Activated CD8-positive, alpha-beta T cell treated with anti-CD3 and anti-CD28 coated beads, Interleukin-2, amount 10 ng/mL, durations not matched to agents 7 days and 5 days (primary cell): ENCODE measurements at regions of chr17 and their contacts with region 1.

Region 1: GRCh38 chr17:29124117-29124924 is 55.9 kb downstream of the MYO18A start:
- DNase-seq: peak; percentile 69
- ATAC-seq: peak; percentile 88
- H3K4me3 Mint-ChIP-seq: no peak overlapping the region
- H3K27ac Mint-ChIP-seq: peak overlapping the region; percentile 30
- H3K4me1 Mint-ChIP-seq: peaks cover 4% of the 10 kb centered on the region
- H3K27me3 Mint-ChIP-seq: no peaks in the 10 kb centered on the region

Region 2: GRCh38 chr17:29111816-29112499 is 12.4 kb before region 1 on chr17:
- CTCF ChIA-PET with region 1: interaction called, 86 read pairs
- POLR2A ChIA-PET with region 1: interaction called, 3 read pairs
- DNase-seq: peak; percentile 71
- ATAC-seq: peak; percentile 72
- H3K4me3 Mint-ChIP-seq: no peak overlapping the region
- H3K27ac Mint-ChIP-seq: no peak overlapping the region
- H3K4me1 Mint-ChIP-seq: peaks cover 7% of the 10 kb centered on the region
- H3K27me3 Mint-ChIP-seq: no peaks in the 10 kb centered on the region

Region 3: DNA sequence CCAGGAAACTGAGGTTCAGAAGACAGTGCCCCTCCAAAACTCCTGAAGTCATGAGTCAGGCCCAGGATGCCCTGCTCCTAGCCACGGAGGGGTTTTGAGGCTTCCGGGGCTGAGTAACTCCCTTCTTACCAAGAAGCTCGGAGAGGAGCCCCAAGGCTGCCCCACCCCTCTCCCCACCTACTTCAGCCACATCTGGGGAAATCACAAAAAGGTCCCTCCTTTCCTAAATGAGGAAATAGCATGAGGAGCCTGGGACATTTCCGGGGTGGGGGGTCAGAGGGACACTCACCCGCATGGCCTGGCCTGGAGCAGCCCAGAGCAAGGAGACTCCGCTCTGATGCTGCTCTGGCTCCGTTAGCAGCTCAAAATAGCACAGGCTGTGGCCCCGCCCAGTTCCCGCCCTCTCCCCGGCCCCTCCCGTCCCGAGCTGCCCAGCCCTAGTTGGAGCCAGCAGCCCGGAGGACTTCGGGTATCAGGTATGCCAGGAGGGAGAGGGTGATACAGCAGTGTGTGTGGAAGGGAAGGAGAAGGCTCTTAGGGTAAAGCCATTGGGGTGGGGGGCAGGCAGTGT is 15.8 kb after region 1 on chr17:
- CTCF ChIA-PET with region 1: interaction called, 414 read pairs
- POLR2A ChIA-PET with region 1: interaction called, 33 read pairs
- DNase-seq: peak; percentile 95
- ATAC-seq: peak; percentile 76
- H3K4me3 Mint-ChIP-seq: peak overlapping the region; percentile 92
- H3K27ac Mint-ChIP-seq: peak overlapping the region; percentile 98
- H3K4me1 Mint-ChIP-seq: peaks cover 70% of the 10 kb centered on the region
- H3K27me3 Mint-ChIP-seq: no peaks in the 10 kb centered on the region

Region 4: GRCh38 chr17:29155227-29155965 is 31.1 kb after region 1 on chr17:
- CTCF ChIA-PET with region 1: interaction called, 414 read pairs
- POLR2A ChIA-PET with region 1: no interaction called
- DNase-seq: peak; percentile 74
- ATAC-seq: peak; percentile 91
- H3K4me3 Mint-ChIP-seq: peak overlapping the region; percentile 20
- H3K27ac Mint-ChIP-seq: peak overlapping the region; percentile 84
- H3K4me1 Mint-ChIP-seq: peaks cover 55% of the 10 kb centered on the region
- H3K27me3 Mint-ChIP-seq: no peaks in the 10 kb centered on the region

Region 5: GRCh38 chr17:29212681-29213121 is 88.4 kb after region 1 on chr17:
- CTCF ChIA-PET with region 1: interaction called, 57 read pairs
- POLR2A ChIA-PET with region 1: no interaction called
- DNase-seq: no peak
- ATAC-seq: no peak
- H3K4me3 Mint-ChIP-seq: no peak overlapping the region
- H3K27ac Mint-ChIP-seq: no peak overlapping the region
- H3K4me1 Mint-ChIP-seq: no peaks in the 10 kb centered on the region
- H3K27me3 Mint-ChIP-seq: no peaks in the 10 kb centered on the region

Region 6: GRCh38 chr17:29293890-29294579 is 169.7 kb after region 1 on chr17 and contains the start of gene NUFIP2:
- CTCF ChIA-PET with region 1: interaction called, 24 read pairs
- POLR2A ChIA-PET with region 1: interaction called, 3 read pairs
- DNase-seq: peak; percentile 99
- ATAC-seq: peak; percentile 92
- H3K4me3 Mint-ChIP-seq: peak within 1 kb of the TSS; percentile 97
- H3K27ac Mint-ChIP-seq: peak within 1 kb of the TSS; percentile 98
- H3K4me1 Mint-ChIP-seq: peaks cover 30% of the 10 kb centered on the region
- H3K27me3 Mint-ChIP-seq: no peaks in the 10 kb centered on the region
- total RNA-seq, gene NUFIP2: 60.3 to 64.5 TPM